Heart right ventricle (tissue), 16 donors: ENCODE measurements at regions of chr1 and their contacts with region 1.

Region 1: DNA sequence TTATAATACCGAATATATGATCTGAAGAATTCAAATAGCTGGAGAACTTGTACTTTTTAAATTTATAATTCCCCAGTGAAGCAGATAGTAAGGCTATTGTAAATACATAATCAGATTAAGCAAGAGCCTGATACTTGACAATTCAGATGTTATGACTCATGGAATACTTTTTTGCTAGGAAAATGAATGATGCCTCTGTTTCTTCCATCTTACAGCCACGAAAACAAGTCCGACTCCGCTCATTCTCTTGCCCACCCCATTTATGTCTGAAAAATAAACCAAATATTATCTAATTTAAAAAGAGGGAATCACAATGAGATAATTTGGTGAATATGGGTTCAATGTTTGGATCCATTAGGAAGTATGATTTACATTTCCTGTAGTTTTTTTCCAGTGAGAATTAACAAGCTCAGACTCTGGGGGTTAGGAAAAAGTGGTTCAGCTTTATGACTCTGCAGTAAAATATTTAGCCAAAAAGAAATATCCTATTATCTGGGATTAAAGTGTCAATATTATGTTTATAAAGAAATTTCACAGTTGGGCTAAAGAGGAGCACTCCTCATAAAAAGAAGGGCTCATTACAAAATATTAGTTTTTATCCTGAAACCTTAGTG is 50.4 kb upstream of the DAB1 start:
- DNase-seq: no peak
- ATAC-seq: no peak
- H3K4me3 ChIP-seq: no peak overlapping the region
- H3K27ac ChIP-seq: no peak overlapping the region
- H3K4me1 ChIP-seq: no peaks in the 10 kb centered on the region
- H3K27me3 ChIP-seq: no peaks in the 10 kb centered on the region
- CTCF ChIP-seq: no peak

Region 2: GRCh38 chr1:57424231-57425027 is 49.8 kb before region 1 on chr1:
- intact Hi-C with region 1: no loop called
- DNase-seq: peak; percentile 27 to 53
- ATAC-seq: peak in 7 of 8 donors; percentile 69 to 80 (median 72)
- H3K4me3 ChIP-seq: peak overlapping the region; percentile 37 to 64 (median 53)
- H3K27ac ChIP-seq: peak overlapping the region in 6 of 10 donors; percentile 25 to 77 (median 52)
- H3K4me1 ChIP-seq: peaks cover 0 to 23% (median 10%) of the 10 kb centered on the region in 9 donors
- H3K27me3 ChIP-seq: peaks cover 0 to 68% (median 54%) of the 10 kb centered on the region in 7 donors
- CTCF ChIP-seq: peak; percentile 24 to 78 (median 66)

Region 3: GRCh38 chr1:57506941-57507340 is 32.7 kb after region 1 on chr1:
- intact Hi-C with region 1: loop called in 1 of 10 experiments (anchors 1 kb)
- DNase-seq: no peak
- ATAC-seq: no peak
- H3K4me3 ChIP-seq: no peak overlapping the region
- H3K27ac ChIP-seq: no peak overlapping the region
- H3K4me1 ChIP-seq: peaks cover 0 to 1% (median 0%) of the 10 kb centered on the region in 9 donors
- H3K27me3 ChIP-seq: no peaks in the 10 kb centered on the region
- CTCF ChIP-seq: no peak